WTC11 (cell line): ENCODE measurements at regions of chr7 and their contacts with region 1.

Region 1: GRCh38 chr7:6558837-6559236 is 7.6 kb upstream of the GRID2IP start:
- DNase-seq: peak; percentile 66
- ATAC-seq: peak; percentile 75
- H3K4me3 Mint-ChIP-seq: no peak overlapping the region
- H3K27ac Mint-ChIP-seq: no peak overlapping the region
- H3K4me1 Mint-ChIP-seq: peaks cover 8% of the 10 kb centered on the region
- H3K27me3 Mint-ChIP-seq: no peaks in the 10 kb centered on the region; the same call in 1 of the 2 replicates
- CTCF ChIP-seq: no peak

Region 2: GRCh38 chr7:6516387-6516983 is 42.4 kb before region 1 on chr7:
- CTCF ChIA-PET with region 1: interaction called, 26 read pairs
- POLR2A ChIA-PET with region 1: no interaction called
- DNase-seq: peak; percentile 89
- ATAC-seq: peak; percentile 99
- H3K4me3 Mint-ChIP-seq: peak overlapping the region; percentile 62
- H3K27ac Mint-ChIP-seq: peak overlapping the region; percentile 92
- H3K4me1 Mint-ChIP-seq: peaks cover 7% of the 10 kb centered on the region; the same call in 1 of the 2 replicates
- H3K27me3 Mint-ChIP-seq: no peaks in the 10 kb centered on the region
- CTCF ChIP-seq: peak; percentile 78

Region 3: GRCh38 chr7:6545398-6546126 is 13.3 kb before region 1 on chr7:
- CTCF ChIA-PET with region 1: interaction called, 16 read pairs
- POLR2A ChIA-PET with region 1: no interaction called
- DNase-seq: no peak
- ATAC-seq: no peak
- H3K4me3 Mint-ChIP-seq: no peak overlapping the region
- H3K27ac Mint-ChIP-seq: no peak overlapping the region
- H3K4me1 Mint-ChIP-seq: peaks cover 4% of the 10 kb centered on the region
- H3K27me3 Mint-ChIP-seq: no peaks in the 10 kb centered on the region; the same call in 1 of the 2 replicates
- CTCF ChIP-seq: no peak

Region 4: GRCh38 chr7:6571160-6571779 is 12.4 kb after region 1 on chr7:
- CTCF ChIA-PET with region 1: interaction called, 13 read pairs
- POLR2A ChIA-PET with region 1: no interaction called
- DNase-seq: no peak
- ATAC-seq: no peak
- H3K4me3 Mint-ChIP-seq: no peak overlapping the region
- H3K27ac Mint-ChIP-seq: no peak overlapping the region
- H3K4me1 Mint-ChIP-seq: no peaks in the 10 kb centered on the region
- H3K27me3 Mint-ChIP-seq: no peaks in the 10 kb centered on the region
- CTCF ChIP-seq: no peak

Region 5: GRCh38 chr7:6577365-6578113 is 18.7 kb after region 1 on chr7 and contains the start of gene ZDHHC4:
- CTCF ChIA-PET with region 1: interaction called, 13 read pairs
- POLR2A ChIA-PET with region 1: no interaction called
- DNase-seq: peak; percentile 79
- ATAC-seq: peak; percentile 83
- H3K4me3 Mint-ChIP-seq: peak within 1 kb of the TSS; percentile 85
- H3K27ac Mint-ChIP-seq: peak within 1 kb of the TSS; percentile 92
- H3K4me1 Mint-ChIP-seq: no peaks in the 10 kb centered on the region
- H3K27me3 Mint-ChIP-seq: no peaks in the 10 kb centered on the region
- CTCF ChIP-seq: no peak
- total RNA-seq, gene ZDHHC4: 37.7 to 48.2 TPM (median 46.4 TPM) in 3 replicates